K562 (cell line): ENCODE measurements at regions of chr6 and their contacts with region 1.

Region 1: GRCh38 chr6:49849213-49849907 is 17.0 kb downstream of the CRISP1 start:
- DNase-seq: peak; percentile 60 to 76 (median 66)
- ATAC-seq: peak; percentile 85
- H3K4me3 ChIP-seq: no peak overlapping the region
- H3K27ac ChIP-seq: no peak overlapping the region
- H3K4me1 ChIP-seq: peaks cover 0 to 7% of the 10 kb centered on the region in 2 experiments; a peak in 1 of 5 replicates
- H3K27me3 ChIP-seq: no peaks in the 10 kb centered on the region
- CTCF ChIP-seq: peak; percentile 50 to 82 (median 57); a peak in 4 of 6 replicates
- EP300 ChIP-seq: no peak
- POLR2A ChIP-seq: no peak
- RAD21 ChIP-seq: peak; percentile 96 to 98

Region 2: DNA sequence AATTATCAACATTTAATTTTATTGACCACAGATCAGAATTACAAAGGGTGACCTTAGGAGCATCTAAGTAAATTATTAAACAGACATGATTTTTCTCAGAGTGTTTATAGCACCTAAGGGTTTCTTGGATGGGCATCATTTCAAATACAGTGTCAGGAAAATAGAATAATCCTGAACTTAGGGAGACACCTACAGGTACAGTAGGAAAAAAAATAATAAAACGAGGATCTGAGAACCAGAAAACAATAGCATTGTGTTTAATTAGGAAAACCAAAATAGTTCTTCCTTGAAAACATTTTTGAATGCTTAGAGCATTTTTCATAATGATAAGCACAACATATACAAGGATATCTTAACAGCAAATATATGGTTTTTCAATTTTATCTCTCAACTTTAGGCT is 425.5 kb before region 1 on chr6:
- CTCF ChIA-PET with region 1: no interaction called
- POLR2A ChIA-PET with region 1: no interaction called
- in situ Hi-C with region 1: no loop called
- intact Hi-C with region 1: no loop called
- DNase-seq: no peak
- ATAC-seq: 0 out of 3 replicates have a peak, but pooled peaks have one; percentile 37
- H3K4me3 ChIP-seq: no peak overlapping the region
- H3K27ac ChIP-seq: no peak overlapping the region
- H3K4me1 ChIP-seq: no peaks in the 10 kb centered on the region
- H3K27me3 ChIP-seq: no peaks in the 10 kb centered on the region
- CTCF ChIP-seq: peak in 1 of 3 experiments; percentile 37; a peak in 1 of 6 replicates
- EP300 ChIP-seq: no peak
- POLR2A ChIP-seq: no peak
- RAD21 ChIP-seq: peak; percentile 36 to 67

Region 3: DNA sequence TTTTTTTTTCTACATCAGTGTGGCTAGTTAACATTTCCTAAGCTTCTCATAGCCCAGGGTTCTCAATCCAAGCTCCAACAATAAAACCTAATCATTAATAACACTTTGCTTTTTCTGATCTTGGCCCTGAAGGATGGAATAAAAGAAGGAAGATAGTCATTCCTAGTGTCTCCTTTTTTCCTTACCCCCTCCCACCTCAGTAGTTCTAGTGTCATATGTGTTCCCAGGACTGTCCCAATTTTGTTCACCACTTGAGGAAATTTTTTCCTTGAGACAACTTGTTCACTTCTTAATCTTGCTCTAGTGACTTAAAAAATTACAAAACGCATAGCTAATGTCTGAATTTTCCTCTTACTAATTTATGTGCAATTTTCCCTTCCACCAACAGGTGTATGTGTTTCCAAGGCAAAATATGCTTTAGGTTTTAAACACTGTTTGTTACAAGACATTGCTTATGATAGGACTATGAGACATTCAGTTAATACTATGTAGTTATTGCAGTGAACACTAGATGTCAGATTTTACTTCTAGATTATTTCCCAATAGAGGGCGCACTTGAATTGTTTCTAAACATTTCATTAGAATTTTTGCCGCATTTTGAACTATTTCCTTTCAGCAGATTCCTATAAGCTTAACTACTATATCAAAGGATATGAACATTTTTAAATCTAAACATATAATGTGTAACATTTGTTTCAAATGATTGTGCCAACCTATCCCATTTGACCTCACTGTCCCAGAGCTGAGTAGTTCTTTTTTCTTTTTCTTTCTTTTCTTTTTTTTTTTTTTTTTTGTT is 317.4 kb before region 1 on chr6:
- CTCF ChIA-PET with region 1: interaction called, 42 read pairs
- POLR2A ChIA-PET with region 1: no interaction called
- in situ Hi-C with region 1: loop called (anchors 10 kb)
- intact Hi-C with region 1: loop called (anchors 1 kb)
- DNase-seq: peak; percentile 55 to 72 (median 60)
- ATAC-seq: peak; percentile 95
- H3K4me3 ChIP-seq: no peak overlapping the region
- H3K27ac ChIP-seq: no peak overlapping the region; the same call in 2 of the 3 replicates
- H3K4me1 ChIP-seq: no peaks in the 10 kb centered on the region; a peak in 1 of 5 replicates
- H3K27me3 ChIP-seq: no peaks in the 10 kb centered on the region
- CTCF ChIP-seq: peak; percentile 79 to 100 (median 99)
- EP300 ChIP-seq: 0 out of 2 replicates have a peak, but pooled peaks have one; percentile 40
- POLR2A ChIP-seq: no peak
- RAD21 ChIP-seq: peak; percentile 98 to 99

Region 4: GRCh38 chr6:49606696-49607390 is 242.5 kb before region 1 on chr6:
- CTCF ChIA-PET with region 1: interaction called, 5 read pairs
- POLR2A ChIA-PET with region 1: no interaction called
- in situ Hi-C with region 1: no loop called
- intact Hi-C with region 1: loop called (anchors 5 kb)
- DNase-seq: peak; percentile 76 to 86 (median 81)
- ATAC-seq: peak; percentile 71
- H3K4me3 ChIP-seq: no peak overlapping the region
- H3K27ac ChIP-seq: no peak overlapping the region
- H3K4me1 ChIP-seq: no peaks in the 10 kb centered on the region
- H3K27me3 ChIP-seq: no peaks in the 10 kb centered on the region
- CTCF ChIP-seq: peak; percentile 86 to 88 (median 88)
- EP300 ChIP-seq: no peak
- POLR2A ChIP-seq: no peak
- RAD21 ChIP-seq: peak; percentile 83 to 91

Region 5: DNA sequence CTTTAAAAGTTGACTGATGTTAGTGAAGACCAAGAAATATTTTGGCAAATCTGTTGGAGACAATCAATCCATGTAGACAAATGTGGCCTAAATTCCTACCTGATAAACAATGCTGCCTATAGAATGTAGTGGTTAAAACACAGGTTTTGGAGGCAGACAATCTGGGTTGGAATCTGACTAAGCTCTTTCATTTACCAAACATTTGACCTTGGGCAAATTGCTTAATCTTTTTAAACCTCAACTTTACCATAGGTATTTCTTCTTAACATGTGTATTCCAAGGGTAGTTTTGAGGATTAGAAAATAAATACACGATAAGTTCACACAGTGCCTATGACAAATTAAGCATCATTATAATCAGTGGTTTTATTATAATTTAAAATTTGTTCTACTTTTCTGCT is 224.2 kb before region 1 on chr6:
- CTCF ChIA-PET with region 1: interaction called, 5 read pairs
- POLR2A ChIA-PET with region 1: no interaction called
- in situ Hi-C with region 1: loop called (anchors 5 kb)
- intact Hi-C with region 1: loop called (anchors 1 kb)
- DNase-seq: no peak
- ATAC-seq: no peak
- H3K4me3 ChIP-seq: no peak overlapping the region
- H3K27ac ChIP-seq: no peak overlapping the region
- H3K4me1 ChIP-seq: peaks cover 0 to 7% of the 10 kb centered on the region in 2 experiments; a peak in 2 of 5 replicates
- H3K27me3 ChIP-seq: no peaks in the 10 kb centered on the region
- CTCF ChIP-seq: no peak
- EP300 ChIP-seq: no peak
- POLR2A ChIP-seq: no peak
- RAD21 ChIP-seq: no peak

Region 6: DNA sequence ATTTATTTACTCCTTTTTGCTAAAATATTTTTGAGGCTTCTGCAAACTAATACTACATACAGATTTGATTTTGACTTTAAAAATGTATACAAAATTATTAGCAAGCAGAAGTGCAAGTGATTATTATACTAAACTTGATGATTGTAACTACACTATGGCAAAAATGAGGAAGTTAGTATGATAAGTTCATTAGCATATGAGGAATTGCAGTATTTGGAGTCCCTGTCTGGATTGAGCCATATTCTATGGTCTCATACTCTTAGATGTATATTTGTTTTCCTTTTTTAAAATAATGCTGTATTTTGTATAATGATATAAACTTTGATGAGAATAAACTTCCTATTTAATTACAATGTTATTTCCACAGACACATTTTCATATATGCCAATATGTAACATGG is 119.1 kb before region 1 on chr6:
- CTCF ChIA-PET with region 1: no interaction called
- POLR2A ChIA-PET with region 1: no interaction called
- in situ Hi-C with region 1: no loop called
- intact Hi-C with region 1: loop called (anchors 5 kb)
- DNase-seq: no peak
- ATAC-seq: 0 out of 3 replicates have a peak, but pooled peaks have one; percentile 31
- H3K4me3 ChIP-seq: no peak overlapping the region
- H3K27ac ChIP-seq: no peak overlapping the region
- H3K4me1 ChIP-seq: peaks cover 4 to 28% of the 10 kb centered on the region in 2 experiments; a peak in 3 of 5 replicates
- H3K27me3 ChIP-seq: no peaks in the 10 kb centered on the region
- CTCF ChIP-seq: no peak
- EP300 ChIP-seq: no peak
- POLR2A ChIP-seq: no peak
- RAD21 ChIP-seq: no peak

Region 7: GRCh38 chr6:49980898-49981297 is 131.5 kb after region 1 on chr6:
- CTCF ChIA-PET with region 1: no interaction called
- POLR2A ChIA-PET with region 1: no interaction called
- in situ Hi-C with region 1: no loop called
- intact Hi-C with region 1: no loop called
- DNase-seq: peak in 1 of 4 experiments; percentile 23
- ATAC-seq: no peak
- H3K4me3 ChIP-seq: no peak overlapping the region
- H3K27ac ChIP-seq: no peak overlapping the region
- H3K4me1 ChIP-seq: no peaks in the 10 kb centered on the region; a peak in 1 of 5 replicates
- H3K27me3 ChIP-seq: no peaks in the 10 kb centered on the region
- CTCF ChIP-seq: no peak
- EP300 ChIP-seq: no peak
- POLR2A ChIP-seq: no peak
- RAD21 ChIP-seq: no peak

Region 8: DNA sequence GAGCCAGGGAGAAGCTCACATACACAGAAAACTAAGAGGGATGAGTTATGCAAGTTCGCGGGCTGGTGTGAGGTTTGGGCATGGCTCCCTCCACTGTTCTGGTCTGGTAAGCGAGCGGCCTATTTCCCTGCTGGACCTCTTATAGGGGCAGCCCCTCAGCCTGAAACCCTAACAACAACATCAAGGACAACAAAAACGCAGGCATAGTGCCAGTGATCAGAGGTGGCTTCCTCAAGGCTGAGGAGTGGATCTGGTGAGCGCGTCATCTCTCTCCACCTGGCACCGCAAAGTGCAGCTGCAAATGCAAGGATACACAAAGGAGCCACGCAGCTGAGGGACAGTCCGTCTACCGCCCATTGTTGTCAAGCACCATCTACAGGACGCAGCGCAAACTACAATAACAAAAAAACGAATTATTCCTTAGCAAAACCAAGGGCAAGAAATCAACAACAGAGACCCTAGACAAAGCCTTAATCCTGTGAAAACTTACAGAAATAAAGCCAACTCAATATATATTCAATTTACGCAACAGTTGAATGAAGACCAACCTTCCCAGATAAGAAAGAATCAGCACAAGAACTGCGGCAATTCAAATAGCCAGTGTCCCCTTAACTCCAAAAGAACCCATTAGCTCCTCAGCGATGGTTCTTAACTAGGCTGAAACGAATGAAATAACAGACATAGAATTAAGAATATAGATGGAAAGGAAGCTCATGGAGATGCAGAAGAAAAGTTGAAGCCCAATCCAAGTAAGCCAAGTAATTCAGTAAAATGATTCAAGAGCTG is 181.6 kb after region 1 on chr6:
- CTCF ChIA-PET with region 1: interaction called, 3 read pairs
- POLR2A ChIA-PET with region 1: no interaction called
- in situ Hi-C with region 1: no loop called
- intact Hi-C with region 1: loop called (anchors 1 kb)
- DNase-seq: peak; percentile 11 to 77 (median 34)
- ATAC-seq: peak; percentile 97
- H3K4me3 ChIP-seq: 0 out of 2 replicates have a peak overlapping the region, but pooled peaks have one; percentile 18
- H3K27ac ChIP-seq: no peak overlapping the region
- H3K4me1 ChIP-seq: peaks cover 0 to 8% of the 10 kb centered on the region in 2 experiments; a peak in 2 of 5 replicates
- H3K27me3 ChIP-seq: no peaks in the 10 kb centered on the region; a peak in 1 of 5 replicates
- CTCF ChIP-seq: peak; percentile 62 to 86 (median 74)
- EP300 ChIP-seq: no peak
- POLR2A ChIP-seq: no peak
- RAD21 ChIP-seq: peak; percentile 82 to 83; a peak in 3 of 4 replicates